Motor neuron (in vitro differentiated cells): ENCODE measurements at regions of chr6 and their contacts with region 1.

Region 1: GRCh38 chr6:124795643-124796463 is 166.4 kb upstream of the RNF217 start:
- ATAC-seq: peak; percentile 50 to 92 (median 70)
- H3K4me3 ChIP-seq: no peak overlapping the region
- H3K27ac ChIP-seq: no peak overlapping the region
- H3K4me1 ChIP-seq: no peaks in the 10 kb centered on the region

Region 2: GRCh38 chr6:123415844-123416468 is 1379.9 kb before region 1 on chr6:
- in situ Hi-C with region 1: loop called in 2 of 9 experiments (anchors 25 kb)
- ATAC-seq: peak; percentile 38 to 71 (median 64)
- H3K4me3 ChIP-seq: no peak overlapping the region
- H3K27ac ChIP-seq: no peak overlapping the region
- H3K4me1 ChIP-seq: peaks cover 6 to 18% of the 10 kb centered on the region in 2 donors

Region 3: GRCh38 chr6:123770247-123770949 is 1025.5 kb before region 1 on chr6:
- in situ Hi-C with region 1: loop called in 2 of 9 experiments (anchors 25 kb)
- ATAC-seq: peak in 1 of 8 experiments; percentile 39
- H3K4me3 ChIP-seq: no peak overlapping the region
- H3K27ac ChIP-seq: no peak overlapping the region
- H3K4me1 ChIP-seq: no peaks in the 10 kb centered on the region

Region 4: GRCh38 chr6:123777563-123777962 is 1018.3 kb before region 1 on chr6:
- in situ Hi-C with region 1: loop called in 2 of 9 experiments (anchors 25 kb)
- ATAC-seq: peak in 6 of 8 experiments; percentile 21 to 75 (median 46)
- H3K4me3 ChIP-seq: no peak overlapping the region
- H3K27ac ChIP-seq: no peak overlapping the region
- H3K4me1 ChIP-seq: peaks cover 0 to 10% of the 10 kb centered on the region in 2 donors

Region 5: GRCh38 chr6:123802697-123803496 is 993.0 kb before region 1 on chr6:
- in situ Hi-C with region 1: loop called in 2 of 9 experiments (anchors 25 kb)
- ATAC-seq: peak; percentile 72 to 96 (median 78)
- H3K4me3 ChIP-seq: peak overlapping the region; percentile 50 to 97 (median 79)
- H3K27ac ChIP-seq: peak overlapping the region; percentile 12 to 31
- H3K4me1 ChIP-seq: peaks cover 4% of the 10 kb centered on the region in 2 donors

Region 6: GRCh38 chr6:124622351-124622750 is 173.5 kb before region 1 on chr6:
- in situ Hi-C with region 1: no loop called
- ATAC-seq: no peak
- H3K4me3 ChIP-seq: no peak overlapping the region
- H3K27ac ChIP-seq: no peak overlapping the region
- H3K4me1 ChIP-seq: no peaks in the 10 kb centered on the region

Region 7: DNA sequence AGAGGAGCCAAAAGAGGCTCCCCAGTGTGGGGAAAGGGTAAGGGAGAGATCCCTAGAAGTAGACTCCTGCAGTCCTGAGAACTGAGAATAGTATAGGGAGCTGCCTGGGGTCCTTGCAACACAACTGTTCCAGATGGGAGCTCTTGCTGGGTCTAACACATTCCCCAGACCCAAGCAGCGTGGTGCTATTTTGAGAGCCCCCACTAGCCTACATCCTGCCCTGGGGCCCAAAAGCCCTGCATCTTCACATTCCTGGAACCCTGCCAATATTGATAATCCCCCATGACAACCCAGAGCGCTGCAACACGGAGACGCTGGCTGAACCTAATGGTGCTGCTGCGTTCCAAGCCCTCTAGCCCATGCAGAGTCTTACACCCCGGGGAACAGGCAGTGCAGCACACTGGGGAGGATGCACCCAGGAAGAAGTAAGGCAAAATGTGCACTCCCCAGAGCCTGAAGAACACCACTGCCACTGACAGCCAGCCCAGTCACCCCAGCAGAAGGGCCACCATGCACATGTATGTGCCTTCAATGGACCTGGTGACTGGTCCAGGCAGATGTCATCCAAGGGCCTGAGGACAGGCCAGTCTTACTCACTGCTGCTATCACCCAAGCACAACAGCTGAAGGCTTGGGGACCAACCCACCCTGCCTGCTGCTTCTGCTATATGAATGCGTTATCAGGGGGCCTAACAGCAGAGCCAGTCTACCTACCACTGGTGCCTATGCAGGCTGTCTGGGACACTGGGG is 159.4 kb after region 1 on chr6:
- in situ Hi-C with region 1: no loop called
- ATAC-seq: peak in 2 of 8 experiments; percentile 32 to 47
- H3K4me3 ChIP-seq: no peak overlapping the region
- H3K27ac ChIP-seq: no peak overlapping the region
- H3K4me1 ChIP-seq: no peaks in the 10 kb centered on the region

Region 8: GRCh38 chr6:125041740-125042459 is 246.0 kb after region 1 on chr6:
- in situ Hi-C with region 1: no loop called
- ATAC-seq: peak in 1 of 8 experiments; percentile 33
- H3K4me3 ChIP-seq: no peak overlapping the region
- H3K27ac ChIP-seq: no peak overlapping the region
- H3K4me1 ChIP-seq: peaks cover 0 to 8% of the 10 kb centered on the region in 2 donors